ENCODE measurements at regions of chr12 and their contacts with region 1.

Region 1: DNA sequence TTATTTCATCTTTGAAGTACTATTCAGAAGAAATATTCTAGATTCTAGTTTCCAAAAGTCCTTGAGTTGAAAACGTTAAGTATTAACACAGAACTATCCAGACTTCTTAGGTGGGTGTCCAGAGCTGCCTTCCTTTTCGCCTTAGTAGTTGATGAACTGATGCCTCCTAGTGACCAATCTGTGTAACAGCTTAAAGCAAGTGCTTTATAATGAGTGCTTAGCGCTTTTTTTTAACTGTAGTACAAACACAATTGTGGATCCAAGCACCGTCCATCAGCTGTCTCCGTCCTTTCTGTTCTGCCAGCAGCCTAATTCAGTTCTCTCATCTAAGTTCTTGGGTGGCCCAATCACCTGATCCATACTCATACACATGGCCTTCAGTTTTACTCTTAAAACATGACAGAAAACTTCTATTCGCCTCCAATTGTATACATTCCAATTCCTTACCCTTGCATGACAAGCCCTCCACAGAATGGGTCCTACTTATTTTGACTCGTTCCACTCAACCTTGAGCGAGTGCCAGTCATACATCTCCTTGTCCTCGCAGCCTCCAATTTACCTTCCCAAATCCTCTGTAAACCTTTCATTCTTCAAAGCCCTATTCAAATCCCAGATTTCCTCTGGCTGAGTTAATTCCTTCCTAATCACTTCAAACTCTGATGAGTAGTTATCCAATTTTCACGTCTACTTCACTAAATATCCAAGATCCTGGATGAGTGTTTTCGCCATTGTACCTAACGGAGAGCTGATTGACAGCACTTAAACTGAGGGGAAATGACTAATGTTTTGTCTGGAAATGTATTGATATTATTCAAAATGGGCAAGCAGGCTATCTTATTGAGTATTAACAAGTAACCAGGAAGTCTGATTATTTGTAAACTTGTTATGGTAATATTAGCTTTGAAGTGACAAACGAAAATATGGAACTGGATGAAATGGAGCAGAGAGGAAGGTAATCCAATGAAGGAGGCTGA is 5.8 kb upstream of the PHLDA1 start:
- DNase-seq: no peak
- H3K4me3 ChIP-seq: no peak overlapping the region
- H3K27ac ChIP-seq: no peak overlapping the region
- H3K4me1 ChIP-seq: peaks cover 0 to 22% (median 5%) of the 10 kb centered on the region in 4 donors
- H3K27me3 ChIP-seq: no peaks in the 10 kb centered on the region
- CTCF ChIP-seq: peak; percentile 72 to 89 (median 82)
- EP300 ChIP-seq: no peak
- POLR2A ChIP-seq: no peak

Region 2: DNA sequence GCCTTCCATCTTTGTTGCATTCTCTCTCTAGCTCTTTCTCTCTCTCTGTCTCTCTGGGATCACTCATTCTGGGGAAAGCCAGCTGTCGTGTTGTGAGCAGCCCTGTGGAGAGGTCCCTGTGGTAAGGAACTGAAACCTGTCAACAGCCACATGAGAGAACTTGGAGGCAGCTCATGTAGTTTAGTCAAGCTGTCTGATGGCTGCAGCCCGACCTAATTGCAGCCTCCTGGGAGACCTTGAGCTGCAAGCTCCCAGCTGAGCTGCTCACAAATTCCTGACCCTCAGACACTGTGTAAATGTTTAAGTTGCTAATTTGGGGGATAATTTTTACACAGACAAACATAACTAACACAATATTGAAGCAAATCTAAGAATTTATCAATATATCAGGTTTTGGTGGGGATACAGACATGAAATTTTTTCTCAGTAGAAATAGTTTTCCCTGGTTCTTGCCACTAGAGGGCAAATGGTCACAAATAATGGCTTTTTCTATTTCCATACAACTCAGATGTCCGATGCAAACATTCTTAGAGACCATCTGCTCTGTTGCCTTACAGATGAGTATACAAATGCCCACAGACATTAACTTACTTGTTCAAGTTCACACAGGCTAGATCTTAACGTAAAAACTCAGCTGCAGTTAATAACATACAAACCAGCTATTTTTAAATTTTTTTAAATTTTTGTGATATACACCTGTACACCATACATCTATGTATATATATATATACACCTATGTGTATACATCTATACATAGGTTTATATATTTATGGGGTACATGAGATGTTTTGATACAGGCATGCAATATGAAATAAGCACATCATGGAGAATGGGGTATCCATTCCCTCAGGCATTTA is 510.5 kb before region 1 on chr12:
- in situ Hi-C with region 1: loop called (anchors 5 to 25 kb)
- intact Hi-C with region 1: loop called (anchors 5 kb)
- DNase-seq: no peak
- H3K4me3 ChIP-seq: no peak overlapping the region
- H3K27ac ChIP-seq: no peak overlapping the region
- H3K4me1 ChIP-seq: no peaks in the 10 kb centered on the region
- H3K27me3 ChIP-seq: no peaks in the 10 kb centered on the region
- CTCF ChIP-seq: peak; percentile 55 to 68 (median 64)
- EP300 ChIP-seq: no peak
- POLR2A ChIP-seq: no peak

Region 3: DNA sequence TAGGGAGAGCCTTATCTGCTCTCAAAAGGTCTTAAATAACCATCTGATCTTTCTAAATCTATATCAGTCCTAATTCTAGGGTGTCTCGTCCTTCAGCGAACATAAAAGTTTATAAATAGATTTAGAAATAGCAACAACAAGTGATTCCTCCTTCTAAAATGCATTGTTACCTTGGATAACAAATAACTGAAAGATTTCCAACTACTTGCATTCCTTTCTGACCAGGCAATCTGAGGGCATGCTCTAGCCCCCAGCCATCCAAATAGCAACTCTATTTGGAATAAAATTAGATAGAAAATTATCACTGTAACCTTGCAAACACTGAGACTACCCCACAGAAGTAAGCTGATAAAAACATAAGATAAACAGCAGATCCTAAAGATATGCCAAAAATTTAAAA is 504.2 kb before region 1 on chr12:
- in situ Hi-C with region 1: loop called (anchors 5 to 25 kb)
- intact Hi-C with region 1: loop called (anchors 5 kb)
- DNase-seq: no peak
- H3K4me3 ChIP-seq: no peak overlapping the region
- H3K27ac ChIP-seq: no peak overlapping the region
- H3K4me1 ChIP-seq: no peaks in the 10 kb centered on the region
- H3K27me3 ChIP-seq: no peaks in the 10 kb centered on the region
- CTCF ChIP-seq: no peak
- EP300 ChIP-seq: no peak
- POLR2A ChIP-seq: no peak